Activated CD8-positive, alpha-beta T cell treated with anti-CD3 and anti-CD28 coated beads for 36 hours (primary cell): ENCODE measurements at regions of chr22 and their contacts with region 1.

Region 1: DNA sequence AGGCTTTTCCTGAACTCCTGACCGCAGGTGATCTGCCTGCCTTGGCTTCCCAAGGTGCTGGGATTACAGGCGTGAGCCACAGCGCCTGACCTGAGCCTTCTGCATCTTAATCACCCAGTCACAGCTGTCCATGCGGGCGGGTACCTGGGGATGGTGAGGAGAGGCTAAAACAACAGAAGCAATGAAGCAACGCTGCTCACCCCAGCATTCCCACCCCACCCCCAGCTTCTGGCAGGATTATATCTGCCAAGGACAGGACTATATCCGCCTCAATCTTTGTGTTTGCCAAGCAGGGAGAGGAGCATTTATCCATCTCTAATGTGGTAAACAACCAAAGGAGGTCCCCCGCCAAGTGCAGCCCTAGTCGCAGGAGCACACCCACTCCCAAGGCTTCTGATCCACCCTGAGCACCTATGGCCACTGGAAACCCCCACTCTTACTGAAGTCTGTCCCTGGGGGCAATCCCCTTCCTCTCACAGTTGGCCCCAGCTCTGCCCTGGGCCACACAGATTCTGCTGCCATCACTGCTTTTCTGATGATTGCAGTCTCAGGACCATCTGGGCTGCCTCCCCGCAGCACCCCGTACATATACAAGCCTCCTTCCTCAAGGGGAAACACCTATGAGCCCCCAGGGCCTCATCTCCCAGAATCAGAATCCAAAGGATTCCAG is 8.8 kb upstream of the LGALS2 start:
- DNase-seq: no peak
- ATAC-seq: no peak
- H3K4me3 Mint-ChIP-seq: no peak overlapping the region
- H3K27ac Mint-ChIP-seq: no peak overlapping the region
- H3K4me1 Mint-ChIP-seq: peaks cover 11% of the 10 kb centered on the region
- H3K27me3 Mint-ChIP-seq: peaks cover 3% of the 10 kb centered on the region
- CTCF ChIP-seq: no peak

Region 2: DNA sequence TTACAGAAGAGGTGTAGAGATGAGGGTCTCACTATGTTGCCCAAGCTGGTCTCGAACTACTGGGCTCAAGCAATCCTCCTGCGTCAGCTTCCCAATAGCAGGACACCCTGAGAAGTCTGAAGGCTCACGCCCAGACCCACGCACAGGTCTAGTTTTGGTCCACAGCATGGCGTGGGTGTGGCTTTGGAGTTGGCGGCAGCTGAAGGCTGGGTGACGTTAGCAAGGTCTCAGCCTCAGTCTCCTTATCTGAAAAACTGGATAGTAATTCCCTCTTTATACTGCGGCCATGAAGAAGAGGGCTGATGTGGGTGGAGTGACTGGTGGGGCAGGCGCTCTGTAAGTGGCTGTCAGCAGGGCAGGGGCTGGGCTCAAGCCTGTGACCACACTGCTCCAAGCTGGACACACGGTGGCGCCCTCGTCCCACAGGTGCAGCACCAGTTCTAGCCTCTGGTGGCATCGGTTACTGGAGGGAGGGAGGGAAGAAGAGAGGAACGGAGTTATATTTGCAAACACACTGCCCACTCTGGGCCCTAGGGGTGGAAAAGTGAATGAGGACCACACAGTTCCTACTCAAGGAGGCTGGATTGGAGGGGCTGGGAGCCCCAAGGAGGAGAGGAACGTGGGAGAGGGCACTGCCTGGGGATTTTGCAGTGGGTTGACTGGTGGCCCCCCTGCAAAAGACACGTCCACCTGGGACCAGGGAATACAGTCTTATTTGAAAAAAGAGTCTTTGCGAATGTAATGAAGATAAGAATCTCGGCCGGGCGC is 49.9 kb before region 1 on chr22:
- CTCF ChIA-PET with region 1: interaction called, 126 read pairs
- POLR2A ChIA-PET with region 1: interaction called, 4 read pairs
- intact Hi-C with region 1: loop called (anchors 2 kb)
- DNase-seq: peak; percentile 95
- ATAC-seq: peak; percentile 93
- H3K4me3 Mint-ChIP-seq: no peak overlapping the region
- H3K27ac Mint-ChIP-seq: peak overlapping the region; percentile 46
- H3K4me1 Mint-ChIP-seq: peaks cover 41% of the 10 kb centered on the region
- H3K27me3 Mint-ChIP-seq: peaks cover 27% of the 10 kb centered on the region
- CTCF ChIP-seq: peak; percentile 94

Region 3: GRCh38 chr22:37561212-37562048 is 27.3 kb before region 1 on chr22:
- CTCF ChIA-PET with region 1: interaction called, 166 read pairs
- POLR2A ChIA-PET with region 1: interaction called, 5 read pairs
- intact Hi-C with region 1: no loop called
- DNase-seq: peak; percentile 95
- ATAC-seq: peak; percentile 68
- H3K4me3 Mint-ChIP-seq: peak overlapping the region; percentile 50
- H3K27ac Mint-ChIP-seq: peak overlapping the region; percentile 65
- H3K4me1 Mint-ChIP-seq: peaks cover 27% of the 10 kb centered on the region
- H3K27me3 Mint-ChIP-seq: peaks cover 49% of the 10 kb centered on the region
- CTCF ChIP-seq: peak; percentile 82

Region 4: GRCh38 chr22:37601540-37602442 is 13.1 kb after region 1 on chr22:
- CTCF ChIA-PET with region 1: interaction called, 119 read pairs
- POLR2A ChIA-PET with region 1: interaction called, 12 read pairs
- intact Hi-C with region 1: no loop called
- DNase-seq: no peak
- ATAC-seq: peak; percentile 32
- H3K4me3 Mint-ChIP-seq: no peak overlapping the region
- H3K27ac Mint-ChIP-seq: no peak overlapping the region
- H3K4me1 Mint-ChIP-seq: peaks cover 30% of the 10 kb centered on the region
- H3K27me3 Mint-ChIP-seq: no peaks in the 10 kb centered on the region
- CTCF ChIP-seq: no peak

Region 5: GRCh38 chr22:37764622-37765021 is 175.9 kb after region 1 on chr22:
- CTCF ChIA-PET with region 1: no interaction called
- POLR2A ChIA-PET with region 1: no interaction called
- intact Hi-C with region 1: no loop called
- DNase-seq: no peak
- ATAC-seq: no peak
- H3K4me3 Mint-ChIP-seq: no peak overlapping the region
- H3K27ac Mint-ChIP-seq: no peak overlapping the region
- H3K4me1 Mint-ChIP-seq: no peaks in the 10 kb centered on the region
- H3K27me3 Mint-ChIP-seq: no peaks in the 10 kb centered on the region
- CTCF ChIP-seq: no peak